ENCODE measurements at regions of chr20 and their contacts with region 1.

Region 1: DNA sequence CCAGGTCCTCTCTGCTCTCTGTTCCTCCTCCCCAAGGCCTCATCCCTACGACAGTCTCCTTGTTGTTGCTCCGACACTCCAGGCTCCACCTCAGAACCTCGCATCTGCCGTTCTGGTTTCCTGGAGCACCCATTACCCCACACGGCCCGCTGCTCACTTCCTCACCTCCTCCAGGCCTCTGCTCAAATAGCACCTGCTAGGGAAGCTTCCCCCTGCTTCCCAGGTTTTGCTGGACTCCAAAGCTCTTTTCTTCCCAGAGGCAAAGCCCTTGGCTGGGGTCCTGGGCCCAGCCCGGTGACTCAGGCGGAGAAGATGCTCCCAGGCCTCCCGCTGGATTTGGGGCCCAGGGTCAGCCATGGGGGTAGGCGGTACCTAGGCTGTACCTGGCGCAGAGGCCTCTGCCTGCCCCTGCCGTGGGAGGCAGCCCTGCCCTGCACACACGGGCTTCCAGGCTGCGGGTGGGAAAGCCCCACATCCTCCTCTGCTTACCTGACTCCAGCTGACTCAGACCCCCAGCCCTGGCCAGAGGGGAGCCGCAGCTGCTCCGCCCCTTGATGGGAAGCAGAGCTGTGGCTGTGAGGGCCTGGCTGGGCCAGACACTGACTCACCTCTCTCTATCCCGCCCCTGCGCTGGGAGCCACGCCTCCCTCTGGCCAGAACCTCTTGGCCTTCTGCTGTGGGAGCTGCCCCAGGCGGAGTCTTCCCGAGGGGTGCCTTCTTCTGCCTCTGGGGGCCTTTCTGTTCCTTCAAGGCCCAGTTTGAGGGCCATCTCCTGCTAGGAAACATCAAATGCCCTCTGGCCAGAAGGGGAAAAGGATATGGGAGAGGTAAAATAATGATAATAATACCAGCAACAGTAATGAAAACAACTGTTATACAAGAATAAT is 130.5 kb downstream of the CEBPB start:
- DNase-seq: peak; percentile 87 to 97
- H3K4me3 ChIP-seq: peak overlapping the region; percentile 12 to 32
- H3K27ac ChIP-seq: peak overlapping the region; percentile 67 to 80
- H3K4me1 ChIP-seq: peaks cover 6 to 17% of the 10 kb centered on the region in 2 donors
- H3K27me3 ChIP-seq: no peaks in the 10 kb centered on the region
- CTCF ChIP-seq: no peak

Region 2: DNA sequence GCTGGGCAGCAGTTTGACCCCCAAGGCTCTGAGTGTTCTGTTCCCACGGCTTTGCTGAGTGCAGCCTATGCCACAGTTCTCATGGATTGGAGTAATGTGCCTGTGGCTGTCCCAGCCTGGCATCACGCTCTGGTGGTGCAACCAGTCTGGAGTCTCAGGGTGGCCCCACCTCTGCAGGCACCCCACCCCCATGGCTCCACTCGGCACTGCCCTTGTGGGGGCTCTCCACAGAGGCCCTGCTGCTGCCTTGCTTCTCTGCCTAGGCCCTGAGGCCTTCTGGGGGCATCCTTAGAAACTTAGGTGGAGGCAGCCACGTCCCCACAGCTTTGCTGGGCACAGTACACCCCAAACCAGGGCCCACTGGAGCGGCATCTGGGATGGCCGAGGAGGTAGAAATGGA is 582.1 kb before region 1 on chr20:
- intact Hi-C with region 1: no loop called
- DNase-seq: no peak
- H3K4me3 ChIP-seq: no peak overlapping the region
- H3K27ac ChIP-seq: no peak overlapping the region
- H3K4me1 ChIP-seq: no peaks in the 10 kb centered on the region
- H3K27me3 ChIP-seq: no peaks in the 10 kb centered on the region
- CTCF ChIP-seq: no peak

Region 3: DNA sequence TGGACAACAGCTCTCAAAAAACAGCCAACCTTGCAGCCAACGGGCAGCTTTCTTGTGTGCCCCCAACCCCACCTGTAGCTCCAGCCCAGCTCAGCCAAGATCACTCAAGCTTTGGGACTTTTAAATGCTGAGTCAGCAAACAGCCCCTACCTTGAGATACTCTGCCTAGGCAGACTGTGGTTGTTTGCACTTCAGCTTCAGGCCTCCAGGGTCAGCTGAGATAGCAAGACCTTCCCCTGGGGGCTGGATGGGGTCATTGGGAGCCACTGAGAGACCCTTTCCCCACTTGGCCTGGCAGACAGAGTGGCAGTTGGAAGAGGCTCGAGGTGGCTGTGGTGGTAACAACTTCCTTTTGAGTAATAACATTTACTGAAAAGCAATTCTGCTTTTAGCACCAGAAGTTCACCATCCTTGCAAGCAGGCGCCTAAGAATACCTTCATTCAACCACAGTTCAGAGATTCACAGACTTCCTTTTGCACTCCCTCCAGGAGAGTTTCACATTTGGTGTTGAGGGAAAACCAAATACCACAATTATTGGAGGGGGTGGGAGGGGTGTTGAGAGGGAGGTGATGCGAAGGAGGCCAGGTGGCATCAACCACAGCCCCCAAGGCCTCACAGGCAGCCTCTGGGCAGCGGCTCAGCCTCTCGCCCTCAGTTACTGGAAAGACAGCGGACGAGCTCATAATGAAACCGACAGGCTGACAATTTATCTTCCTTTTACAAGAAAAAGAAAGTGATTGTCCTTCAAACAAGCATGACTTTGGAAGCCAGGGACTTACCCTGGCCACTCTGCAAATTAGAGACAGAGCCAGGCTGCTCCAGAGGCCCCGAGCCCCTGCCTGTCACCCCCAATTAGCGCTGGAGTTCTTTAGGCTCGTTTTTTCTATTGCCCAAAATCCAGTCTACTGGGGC is 17.6 kb after region 1 on chr20:
- intact Hi-C with region 1: no loop called
- DNase-seq: no peak
- H3K4me3 ChIP-seq: no peak overlapping the region
- H3K27ac ChIP-seq: peak overlapping the region in 1 of 2 donors; percentile 28
- H3K4me1 ChIP-seq: no peaks in the 10 kb centered on the region
- H3K27me3 ChIP-seq: no peaks in the 10 kb centered on the region
- CTCF ChIP-seq: no peak

Region 4: DNA sequence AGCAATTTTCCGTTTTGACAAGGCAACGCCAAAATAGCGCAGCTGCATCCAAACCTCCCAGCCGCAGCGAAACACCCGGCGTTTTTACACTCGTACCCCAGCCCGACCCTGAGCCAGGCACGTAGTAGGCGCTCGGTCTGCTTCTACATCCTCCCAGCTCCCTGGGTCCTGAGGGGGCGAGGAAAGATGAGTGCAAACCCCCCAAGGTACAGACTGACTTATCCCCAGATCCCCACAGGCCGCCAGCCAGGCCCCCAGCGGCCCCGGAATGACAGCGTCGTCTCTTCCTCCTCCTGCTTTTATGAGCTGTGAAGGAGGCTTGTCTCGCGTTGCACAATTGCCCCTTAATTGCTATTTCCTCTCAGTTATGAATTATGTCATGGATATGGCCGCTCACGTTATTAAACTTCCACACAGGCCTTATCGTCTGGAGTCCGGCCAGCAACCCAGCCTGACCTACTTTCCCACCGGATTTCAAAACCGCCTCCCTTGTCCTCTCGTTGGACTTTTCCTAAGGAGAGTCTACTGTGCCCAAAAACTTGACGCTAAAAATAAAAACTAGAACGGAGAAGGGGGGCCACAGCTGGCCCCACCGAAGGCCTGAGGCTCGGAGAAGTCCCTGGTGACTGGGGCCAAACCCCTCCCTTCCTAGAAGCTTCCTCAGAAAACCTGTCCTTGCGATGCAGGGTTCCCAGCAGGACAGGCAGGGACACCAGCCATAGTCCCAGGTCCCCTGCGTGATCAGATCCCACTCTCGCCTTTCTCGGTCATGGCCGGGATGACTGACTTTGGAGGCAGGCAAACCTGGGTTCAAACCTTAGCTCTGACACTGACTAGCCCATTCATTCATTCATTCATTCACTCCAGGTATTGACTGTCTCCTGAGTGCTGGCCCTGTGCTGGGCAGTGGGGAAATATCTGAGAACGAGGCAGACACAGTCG is 58.2 kb after region 1 on chr20:
- intact Hi-C with region 1: loop called (anchors 2 kb)
- DNase-seq: peak; percentile 78 to 97
- H3K4me3 ChIP-seq: peak overlapping the region in 1 of 2 donors; percentile 36
- H3K27ac ChIP-seq: peak overlapping the region; percentile 65 to 81
- H3K4me1 ChIP-seq: peaks cover 8 to 37% of the 10 kb centered on the region in 2 donors
- H3K27me3 ChIP-seq: no peaks in the 10 kb centered on the region
- CTCF ChIP-seq: no peak

Region 5: DNA sequence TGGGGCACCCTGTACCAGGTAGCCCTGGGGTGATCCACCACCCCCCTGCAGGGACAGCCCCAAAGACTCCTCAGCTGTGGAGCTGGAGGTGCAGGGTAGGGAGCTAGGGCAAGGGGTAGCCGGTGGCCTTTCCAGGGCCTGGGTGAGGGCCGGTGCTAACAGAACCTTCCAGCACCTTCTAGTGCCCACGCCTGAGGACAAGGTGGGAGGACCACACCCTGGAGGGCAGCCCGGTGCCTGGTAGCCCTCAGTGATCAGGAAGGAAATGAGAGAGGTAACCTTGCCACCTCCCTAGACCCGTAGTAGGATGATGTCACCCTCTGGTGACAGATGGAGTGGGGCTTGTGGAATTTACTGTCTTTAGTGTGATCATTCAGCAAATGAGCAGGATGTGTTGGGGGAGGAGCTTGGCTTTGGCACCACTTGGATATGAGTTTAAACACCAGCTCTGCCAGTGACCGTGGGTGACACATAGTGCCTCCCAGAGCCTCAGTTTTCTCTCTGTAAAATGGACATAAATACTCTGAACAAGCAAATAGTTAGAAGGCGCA is 1033.7 kb after region 1 on chr20:
- intact Hi-C with region 1: no loop called
- DNase-seq: no peak
- H3K4me3 ChIP-seq: peak overlapping the region in 1 of 2 donors; percentile 1
- H3K27ac ChIP-seq: peak overlapping the region; percentile 71 to 85
- H3K4me1 ChIP-seq: peaks cover 0 to 9% of the 10 kb centered on the region in 2 donors
- H3K27me3 ChIP-seq: no peaks in the 10 kb centered on the region
- CTCF ChIP-seq: no peak